ENCODE measurements at regions of chr2 and their contacts with region 1.

Region 1: DNA sequence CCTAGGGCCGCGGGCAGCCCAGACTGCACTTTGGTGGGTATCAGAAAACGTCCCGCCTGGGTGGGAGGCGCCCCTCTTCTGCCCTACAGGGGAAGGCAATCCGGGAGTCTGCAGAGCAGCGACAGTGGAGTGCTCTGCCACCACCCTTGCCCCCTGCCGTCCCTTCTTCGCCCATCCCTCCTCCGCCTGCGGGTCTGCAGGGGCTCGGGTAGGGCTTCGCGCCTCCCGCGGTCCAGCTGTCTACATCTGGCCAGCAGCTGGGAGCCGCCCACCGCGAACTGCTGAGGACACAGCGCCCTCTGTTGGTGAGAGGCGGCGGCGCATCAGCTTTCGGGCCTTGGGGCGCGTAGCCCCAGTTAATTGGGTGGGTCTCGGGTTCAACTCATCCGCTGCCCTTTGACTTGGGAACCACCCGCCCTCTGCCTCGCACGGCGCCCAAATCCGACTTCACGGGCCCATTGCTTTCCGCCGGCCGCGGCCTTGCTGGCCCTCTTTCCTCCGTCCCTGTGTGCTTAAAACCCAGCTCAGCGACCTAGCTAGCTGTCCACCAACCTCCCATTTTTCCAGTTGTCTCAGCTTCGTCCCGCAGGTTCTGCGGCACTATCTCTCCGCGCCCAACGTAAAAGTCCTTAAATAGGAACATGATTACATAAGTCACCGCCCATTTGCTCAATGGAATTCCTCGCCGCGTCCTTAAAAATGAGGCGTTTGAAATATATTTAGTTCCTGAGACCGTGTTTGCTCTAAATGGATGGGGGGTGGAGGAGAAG is 17.6 kb downstream of the WNT10A start:
- DNase-seq: peak; percentile 77 to 90
- H3K4me3 ChIP-seq: peak overlapping the region; percentile 35
- H3K4me3 Mint-ChIP-seq: peak overlapping the region; percentile 66
- H3K27ac Mint-ChIP-seq: no peak overlapping the region
- H3K4me1 ChIP-seq: peaks cover 45% of the 10 kb centered on the region
- H3K4me1 Mint-ChIP-seq: peaks cover 48% of the 10 kb centered on the region
- H3K27me3 ChIP-seq: no peaks in the 10 kb centered on the region
- H3K27me3 Mint-ChIP-seq: peaks cover 8% of the 10 kb centered on the region
- CTCF ChIP-seq: peak; percentile 98

Region 2: GRCh38 chr2:218710687-218711549 is 187.4 kb before region 1 on chr2 and contains the start of gene TTLL4:
- CTCF ChIA-PET with region 1: interaction called, 11 read pairs
- POLR2A ChIA-PET with region 1: no interaction called
- intact Hi-C with region 1: no loop called
- DNase-seq: peak; percentile 98 to 99
- H3K4me3 ChIP-seq: peak within 1 kb of the TSS; percentile 100
- H3K4me3 Mint-ChIP-seq: peak within 1 kb of the TSS; percentile 97
- H3K27ac Mint-ChIP-seq: peak within 1 kb of the TSS; percentile 94
- H3K4me1 ChIP-seq: peaks cover 18% of the 10 kb centered on the region
- H3K4me1 Mint-ChIP-seq: peaks cover 13% of the 10 kb centered on the region
- H3K27me3 ChIP-seq: no peaks in the 10 kb centered on the region
- H3K27me3 Mint-ChIP-seq: no peaks in the 10 kb centered on the region
- CTCF ChIP-seq: peak; percentile 74 to 89
- total RNA-seq, gene TTLL4: 86.6 and 87.9 TPM in 2 replicates

Region 3: GRCh38 chr2:218860950-218861381 is 37.3 kb before region 1 on chr2:
- CTCF ChIA-PET with region 1: interaction called, 26 read pairs
- POLR2A ChIA-PET with region 1: interaction called, 3 read pairs
- intact Hi-C with region 1: no loop called
- DNase-seq: peak; percentile 88 to 93
- H3K4me3 ChIP-seq: peak overlapping the region; percentile 43
- H3K4me3 Mint-ChIP-seq: peak overlapping the region; percentile 76
- H3K27ac Mint-ChIP-seq: no peak overlapping the region
- H3K4me1 ChIP-seq: peaks cover 43% of the 10 kb centered on the region
- H3K4me1 Mint-ChIP-seq: peaks cover 32% of the 10 kb centered on the region
- H3K27me3 ChIP-seq: peaks cover 6% of the 10 kb centered on the region
- H3K27me3 Mint-ChIP-seq: peaks cover 8% of the 10 kb centered on the region
- CTCF ChIP-seq: no peak

Region 4: DNA sequence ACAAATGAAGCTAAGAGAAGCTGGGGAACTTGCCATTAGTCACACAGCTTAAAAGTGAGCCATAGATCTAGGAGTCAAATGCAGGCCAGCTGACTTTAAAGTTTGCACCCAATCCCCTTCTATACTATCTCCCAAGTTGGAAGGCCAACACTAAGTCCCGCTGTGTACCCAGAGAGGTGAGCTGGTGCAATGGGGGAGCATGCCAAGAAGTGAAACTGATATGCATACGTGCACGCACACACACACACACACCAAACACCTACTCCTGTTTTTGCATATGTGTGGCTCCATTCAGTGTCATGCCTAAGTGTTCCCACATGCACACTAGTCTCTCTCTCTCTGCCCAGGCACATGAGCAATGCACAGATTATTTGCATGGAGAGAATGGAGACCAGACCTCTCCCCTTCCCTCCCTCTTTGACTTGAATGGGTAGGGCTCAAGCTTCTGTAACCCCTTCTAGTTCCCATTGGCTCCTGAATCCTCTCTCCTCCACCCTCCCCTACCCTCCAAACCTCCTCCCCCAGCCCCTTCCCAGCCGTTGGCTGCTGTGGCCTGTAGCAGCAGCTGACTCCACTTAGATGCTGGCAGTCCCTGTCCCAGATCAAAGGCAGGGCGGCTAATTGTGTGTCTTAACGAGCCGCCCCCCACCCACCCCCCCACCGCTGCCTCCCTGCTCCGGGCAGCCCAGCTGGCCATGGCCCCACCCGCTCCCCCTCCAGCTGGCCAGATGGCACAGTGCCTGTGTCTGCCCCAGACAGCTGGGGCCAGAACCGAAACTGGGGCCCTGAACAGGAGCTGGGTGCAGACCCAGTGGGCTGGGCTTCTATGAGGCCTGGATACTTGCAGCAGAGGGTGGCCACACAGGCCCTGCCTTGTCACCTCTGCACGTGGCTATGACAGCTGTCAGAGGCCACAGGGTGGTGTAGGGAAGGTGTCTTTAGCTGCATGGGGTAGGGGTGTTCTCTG is 12.0 kb before region 1 on chr2:
- CTCF ChIA-PET with region 1: interaction called, 19 read pairs
- POLR2A ChIA-PET with region 1: interaction called, 6 read pairs
- intact Hi-C with region 1: no loop called
- DNase-seq: peak in 1 of 2 experiments; percentile 19
- H3K4me3 ChIP-seq: no peak overlapping the region
- H3K4me3 Mint-ChIP-seq: no peak overlapping the region
- H3K27ac Mint-ChIP-seq: no peak overlapping the region
- H3K4me1 ChIP-seq: peaks cover 4% of the 10 kb centered on the region; the same call in 1 of the 2 replicates
- H3K4me1 Mint-ChIP-seq: peaks cover 1% of the 10 kb centered on the region
- H3K27me3 ChIP-seq: no peaks in the 10 kb centered on the region
- H3K27me3 Mint-ChIP-seq: peaks cover 2% of the 10 kb centered on the region
- CTCF ChIP-seq: no peak

Region 5: DNA sequence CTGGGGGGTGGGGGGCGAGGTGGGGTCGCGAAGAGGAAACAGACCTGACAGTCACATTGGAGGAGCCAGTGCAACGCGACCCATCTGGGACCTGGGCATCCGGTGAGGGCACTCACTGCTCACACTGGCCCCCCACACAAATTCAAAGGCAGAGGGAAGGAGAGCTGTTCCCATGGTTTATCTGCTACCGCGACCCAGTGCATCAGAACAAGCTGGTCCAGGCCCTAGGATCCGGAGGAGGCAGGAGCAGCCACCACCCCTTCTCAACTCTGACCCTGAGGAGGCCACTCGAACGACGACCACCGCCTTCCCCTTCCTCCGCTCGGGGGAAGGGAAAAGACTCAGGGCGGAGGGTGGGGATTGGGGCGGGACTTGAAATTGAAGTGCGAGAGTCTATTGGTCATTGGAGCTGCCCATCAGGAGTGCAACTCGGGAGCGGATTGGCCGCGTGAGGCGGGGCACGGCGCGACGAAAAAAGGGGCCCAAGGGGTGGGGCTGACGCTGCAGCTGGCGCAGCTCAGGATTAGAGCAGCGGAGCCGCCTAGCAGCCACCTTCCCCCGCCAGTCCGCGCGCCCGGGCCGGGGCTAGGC is 60.9 kb after region 1 on chr2 and contains the start of gene CDK5R2:
- CTCF ChIA-PET with region 1: interaction called, 8 read pairs
- POLR2A ChIA-PET with region 1: no interaction called
- intact Hi-C with region 1: loop called (anchors 5 kb)
- DNase-seq: peak; percentile 94
- H3K4me3 ChIP-seq: peak within 1 kb of the TSS; percentile 52
- H3K4me3 Mint-ChIP-seq: peak within 1 kb of the TSS; percentile 76
- H3K27ac Mint-ChIP-seq: no peak within 1 kb of the TSS
- H3K4me1 ChIP-seq: peaks cover 36% of the 10 kb centered on the region
- H3K4me1 Mint-ChIP-seq: peaks cover 16% of the 10 kb centered on the region
- H3K27me3 ChIP-seq: peaks cover 4% of the 10 kb centered on the region
- H3K27me3 Mint-ChIP-seq: peaks cover 32% of the 10 kb centered on the region
- CTCF ChIP-seq: no peak
- total RNA-seq, gene CDK5R2: 0.18 and 0.21 TPM in 2 replicates

Region 6: GRCh38 chr2:219002395-219003266 is 104.3 kb after region 1 on chr2:
- CTCF ChIA-PET with region 1: interaction called, 9 read pairs
- POLR2A ChIA-PET with region 1: interaction called, 14 read pairs
- intact Hi-C with region 1: no loop called
- DNase-seq: peak in 1 of 2 experiments; percentile 85
- H3K4me3 ChIP-seq: peak overlapping the region; percentile 67
- H3K4me3 Mint-ChIP-seq: peak overlapping the region; percentile 79
- H3K27ac Mint-ChIP-seq: no peak overlapping the region
- H3K4me1 ChIP-seq: peaks cover 25% of the 10 kb centered on the region
- H3K4me1 Mint-ChIP-seq: peaks cover 15% of the 10 kb centered on the region
- H3K27me3 ChIP-seq: no peaks in the 10 kb centered on the region
- H3K27me3 Mint-ChIP-seq: peaks cover 7% of the 10 kb centered on the region
- CTCF ChIP-seq: peak; percentile 48 to 77

Region 7: GRCh38 chr2:219475697-219476651 is 577.7 kb after region 1 on chr2:
- CTCF ChIA-PET with region 1: no interaction called
- POLR2A ChIA-PET with region 1: no interaction called
- intact Hi-C with region 1: no loop called
- DNase-seq: peak; percentile 74 to 87
- H3K4me3 ChIP-seq: no peak overlapping the region
- H3K4me3 Mint-ChIP-seq: peak overlapping the region; percentile 10
- H3K27ac Mint-ChIP-seq: no peak overlapping the region
- H3K4me1 ChIP-seq: no peaks in the 10 kb centered on the region
- H3K4me1 Mint-ChIP-seq: no peaks in the 10 kb centered on the region
- H3K27me3 ChIP-seq: no peaks in the 10 kb centered on the region
- H3K27me3 Mint-ChIP-seq: no peaks in the 10 kb centered on the region
- CTCF ChIP-seq: peak; percentile 91 to 94

Measured in Caco-2 (cell line).